T-cell (primary cell): ENCODE measurements at regions of chr5 and their contacts with region 1.

Region 1: GRCh38 chr5:147576646-147577535 is 67.0 kb upstream of the DPYSL3 start:
- DNase-seq: peak in 9 of 35 experiments; percentile 2 to 9 (median 4)
- ATAC-seq: no peak
- H3K4me3 ChIP-seq: no peak overlapping the region
- H3K4me3 Mint-ChIP-seq: no peak overlapping the region
- H3K27ac ChIP-seq: no peak overlapping the region
- H3K27ac Mint-ChIP-seq: no peak overlapping the region
- H3K4me1 ChIP-seq: no peaks in the 10 kb centered on the region
- H3K4me1 Mint-ChIP-seq: no peaks in the 10 kb centered on the region
- H3K27me3 ChIP-seq: peaks cover 0 to 5% of the 10 kb centered on the region in 2 experiments
- H3K27me3 Mint-ChIP-seq: peaks cover 4 to 14% of the 10 kb centered on the region in 2 donors

Region 2: DNA sequence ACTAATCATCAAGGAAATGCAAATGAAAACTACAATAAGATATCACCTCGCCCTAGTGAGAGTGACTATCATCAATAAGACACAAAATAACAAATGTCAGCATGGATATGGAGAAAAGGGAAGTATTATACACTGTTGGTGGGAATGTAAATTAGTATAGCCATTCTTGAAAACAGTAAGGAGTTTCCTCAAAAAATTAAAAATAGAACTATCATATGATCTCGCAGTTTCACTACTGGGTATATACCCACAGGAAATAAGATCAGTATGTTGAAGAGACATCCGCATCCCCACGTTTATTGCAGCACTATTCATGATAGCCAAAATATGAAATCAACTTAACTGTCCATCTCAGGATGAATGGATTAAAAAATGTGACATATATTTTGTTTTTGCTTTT is 373.7 kb before region 1 on chr5:
- CTCF ChIA-PET with region 1: no interaction called
- POLR2A ChIA-PET with region 1: no interaction called
- DNase-seq: no peak
- ATAC-seq: no peak
- H3K4me3 ChIP-seq: no peak overlapping the region
- H3K4me3 Mint-ChIP-seq: no peak overlapping the region
- H3K27ac ChIP-seq: no peak overlapping the region
- H3K27ac Mint-ChIP-seq: no peak overlapping the region
- H3K4me1 ChIP-seq: no peaks in the 10 kb centered on the region
- H3K4me1 Mint-ChIP-seq: no peaks in the 10 kb centered on the region
- H3K27me3 ChIP-seq: peaks cover 0 to 2% of the 10 kb centered on the region in 2 experiments
- H3K27me3 Mint-ChIP-seq: peaks cover 8 to 10% of the 10 kb centered on the region in 2 donors

Region 3: DNA sequence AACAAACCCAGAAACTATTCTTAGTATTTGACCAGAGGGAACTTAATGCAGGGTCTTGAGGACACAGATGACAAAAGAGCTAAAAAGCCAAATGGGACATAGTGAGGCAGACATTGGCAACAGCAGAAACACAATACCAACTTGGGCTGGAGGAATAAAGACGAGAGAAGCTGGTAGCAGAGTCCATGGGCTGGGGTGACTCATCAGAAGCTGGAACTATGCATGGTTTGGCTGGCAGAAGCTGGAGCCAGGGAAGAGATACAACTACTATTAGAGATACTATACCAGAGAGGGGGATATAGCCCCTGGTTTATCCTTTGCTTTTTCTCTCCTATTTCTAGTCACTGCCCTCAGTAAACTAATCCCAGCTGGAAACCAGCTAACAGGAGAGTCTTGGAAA is 37.8 kb before region 1 on chr5:
- CTCF ChIA-PET with region 1: interaction called in 1 of 2 experiments, 11 read pairs
- POLR2A ChIA-PET with region 1: no interaction called
- DNase-seq: no peak
- ATAC-seq: no peak
- H3K4me3 ChIP-seq: no peak overlapping the region
- H3K4me3 Mint-ChIP-seq: no peak overlapping the region
- H3K27ac ChIP-seq: no peak overlapping the region
- H3K27ac Mint-ChIP-seq: no peak overlapping the region
- H3K4me1 ChIP-seq: no peaks in the 10 kb centered on the region
- H3K4me1 Mint-ChIP-seq: no peaks in the 10 kb centered on the region
- H3K27me3 ChIP-seq: no peaks in the 10 kb centered on the region
- H3K27me3 Mint-ChIP-seq: no peaks in the 10 kb centered on the region

Region 4: DNA sequence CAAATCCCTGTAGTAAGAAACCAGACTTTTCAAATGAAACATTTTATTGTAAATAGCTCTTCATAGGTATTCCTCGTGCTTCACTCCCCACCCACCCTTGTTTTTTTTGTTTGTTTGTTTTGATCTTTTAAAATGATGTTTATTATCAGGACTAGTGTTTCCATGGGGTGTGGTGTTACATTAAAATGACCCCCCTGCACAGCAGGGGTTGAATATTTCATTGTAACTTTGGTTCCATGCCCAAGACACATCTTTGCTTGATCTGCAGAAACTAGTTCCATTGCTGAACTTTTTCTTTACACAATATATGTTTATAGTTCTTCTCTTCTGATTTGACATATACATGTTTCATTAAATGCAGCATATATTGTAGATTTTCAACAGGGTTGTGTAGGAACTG is 14.2 kb after region 1 on chr5:
- CTCF ChIA-PET with region 1: no interaction called
- POLR2A ChIA-PET with region 1: no interaction called
- DNase-seq: no peak
- ATAC-seq: no peak
- H3K4me3 ChIP-seq: no peak overlapping the region
- H3K4me3 Mint-ChIP-seq: no peak overlapping the region
- H3K27ac ChIP-seq: no peak overlapping the region
- H3K27ac Mint-ChIP-seq: no peak overlapping the region
- H3K4me1 ChIP-seq: no peaks in the 10 kb centered on the region
- H3K4me1 Mint-ChIP-seq: no peaks in the 10 kb centered on the region
- H3K27me3 ChIP-seq: no peaks in the 10 kb centered on the region
- H3K27me3 Mint-ChIP-seq: no peaks in the 10 kb centered on the region